ENCODE measurements at regions of chr6 and their contacts with region 1.

Region 1: DNA sequence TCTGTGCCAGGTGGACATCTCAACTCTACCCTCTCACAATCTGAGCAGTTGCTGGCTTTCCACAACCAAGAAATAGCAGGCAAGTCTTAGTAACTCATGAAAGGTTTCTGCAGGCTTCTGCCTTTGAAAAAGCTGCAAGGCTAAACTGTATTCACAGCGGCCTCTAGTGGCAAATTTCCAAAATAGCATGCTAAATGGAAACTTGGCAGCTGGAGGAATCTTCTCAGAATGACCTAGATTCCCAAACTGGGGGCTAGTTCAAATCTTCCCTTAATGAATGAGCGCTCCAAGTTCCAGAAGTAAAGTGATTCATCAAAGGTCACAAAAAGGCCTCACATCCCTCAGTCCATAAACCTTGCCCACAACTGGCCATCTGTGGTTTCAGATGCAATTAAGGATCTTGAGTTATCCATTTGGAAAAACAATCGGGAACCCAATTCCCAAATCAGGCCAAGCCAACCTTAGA is 11.9 kb upstream of the CPNE5 start:
- DNase-seq: peak in 7 of 14 experiments; percentile 19 to 69 (median 33)
- ATAC-seq: peak; percentile 58
- H3K4me3 ChIP-seq: no peak overlapping the region
- H3K4me3 Mint-ChIP-seq: no peak overlapping the region
- H3K27ac ChIP-seq: no peak overlapping the region
- H3K27ac Mint-ChIP-seq: no peak overlapping the region
- H3K4me1 ChIP-seq: peaks cover 5% of the 10 kb centered on the region
- H3K4me1 Mint-ChIP-seq: no peaks in the 10 kb centered on the region
- H3K27me3 ChIP-seq: no peaks in the 10 kb centered on the region
- H3K27me3 Mint-ChIP-seq: no peaks in the 10 kb centered on the region
- CTCF ChIP-seq: peak; percentile 67

Region 2: GRCh38 chr6:36605560-36606391 is 245.4 kb before region 1 on chr6:
- CTCF ChIA-PET with region 1: no interaction called
- POLR2A ChIA-PET with region 1: no interaction called
- intact Hi-C with region 1: loop called in 1 of 2 experiments (anchors 5 kb)
- DNase-seq: peak in 1 of 14 experiments; percentile 15
- ATAC-seq: peak; percentile 25
- H3K4me3 ChIP-seq: no peak overlapping the region
- H3K4me3 Mint-ChIP-seq: peak overlapping the region; percentile 72
- H3K27ac ChIP-seq: peak overlapping the region in 1 of 2 donors; percentile 28
- H3K27ac Mint-ChIP-seq: peak overlapping the region; percentile 97
- H3K4me1 ChIP-seq: peaks cover 61% of the 10 kb centered on the region
- H3K4me1 Mint-ChIP-seq: peaks cover 88% of the 10 kb centered on the region
- H3K27me3 ChIP-seq: no peaks in the 10 kb centered on the region
- H3K27me3 Mint-ChIP-seq: no peaks in the 10 kb centered on the region
- CTCF ChIP-seq: no peak

Region 3: GRCh38 chr6:36623547-36624459 is 227.4 kb before region 1 on chr6:
- CTCF ChIA-PET with region 1: no interaction called
- POLR2A ChIA-PET with region 1: no interaction called
- intact Hi-C with region 1: loop called in 1 of 2 experiments (anchors 1 kb)
- DNase-seq: peak; percentile 65 to 88 (median 74)
- ATAC-seq: peak; percentile 94
- H3K4me3 ChIP-seq: no peak overlapping the region
- H3K4me3 Mint-ChIP-seq: no peak overlapping the region
- H3K27ac ChIP-seq: no peak overlapping the region
- H3K27ac Mint-ChIP-seq: no peak overlapping the region
- H3K4me1 ChIP-seq: peaks cover 12% of the 10 kb centered on the region
- H3K4me1 Mint-ChIP-seq: peaks cover 6% of the 10 kb centered on the region
- H3K27me3 ChIP-seq: no peaks in the 10 kb centered on the region
- H3K27me3 Mint-ChIP-seq: no peaks in the 10 kb centered on the region
- CTCF ChIP-seq: peak; percentile 83

Region 4: DNA sequence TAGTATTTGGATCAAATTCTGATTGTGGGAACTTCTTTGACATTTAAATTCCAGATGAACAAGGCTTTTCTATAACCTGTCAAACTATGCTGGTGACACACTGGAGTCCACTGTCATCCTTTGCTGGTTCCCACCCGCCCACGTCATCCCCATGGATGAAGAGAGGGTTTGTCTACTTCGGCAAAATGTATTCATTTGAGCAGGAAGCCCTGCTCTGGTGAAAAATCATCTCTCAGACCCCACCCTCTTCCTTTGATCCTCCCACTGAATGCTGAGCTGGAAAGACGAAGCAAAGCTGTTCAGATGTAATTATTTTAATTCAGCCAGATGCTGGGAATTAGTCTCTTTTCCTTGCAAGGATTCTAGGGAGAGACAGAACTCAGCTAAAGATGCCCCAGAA is 62.4 kb before region 1 on chr6:
- CTCF ChIA-PET with region 1: no interaction called
- POLR2A ChIA-PET with region 1: no interaction called
- intact Hi-C with region 1: no loop called
- DNase-seq: peak in 2 of 14 experiments; percentile 9 to 20
- ATAC-seq: no peak
- H3K4me3 ChIP-seq: no peak overlapping the region
- H3K4me3 Mint-ChIP-seq: no peak overlapping the region
- H3K27ac ChIP-seq: no peak overlapping the region
- H3K27ac Mint-ChIP-seq: no peak overlapping the region
- H3K4me1 ChIP-seq: peaks cover 7% of the 10 kb centered on the region
- H3K4me1 Mint-ChIP-seq: no peaks in the 10 kb centered on the region
- H3K27me3 ChIP-seq: peaks cover 0 to 17% of the 10 kb centered on the region in 2 experiments
- H3K27me3 Mint-ChIP-seq: peaks cover 11% of the 10 kb centered on the region
- CTCF ChIP-seq: no peak

Region 5: GRCh38 chr6:37011656-37012378 is 160.6 kb after region 1 on chr6:
- CTCF ChIA-PET with region 1: no interaction called
- POLR2A ChIA-PET with region 1: no interaction called
- intact Hi-C with region 1: no loop called
- DNase-seq: no peak
- ATAC-seq: no peak
- H3K4me3 ChIP-seq: no peak overlapping the region
- H3K4me3 Mint-ChIP-seq: no peak overlapping the region
- H3K27ac ChIP-seq: no peak overlapping the region
- H3K27ac Mint-ChIP-seq: no peak overlapping the region
- H3K4me1 ChIP-seq: peaks cover 7% of the 10 kb centered on the region
- H3K4me1 Mint-ChIP-seq: peaks cover 1% of the 10 kb centered on the region
- H3K27me3 ChIP-seq: no peaks in the 10 kb centered on the region
- H3K27me3 Mint-ChIP-seq: no peaks in the 10 kb centered on the region
- CTCF ChIP-seq: no peak